A673 (cell line): ENCODE measurements at regions of chr6 and their contacts with region 1.

Region 1: DNA sequence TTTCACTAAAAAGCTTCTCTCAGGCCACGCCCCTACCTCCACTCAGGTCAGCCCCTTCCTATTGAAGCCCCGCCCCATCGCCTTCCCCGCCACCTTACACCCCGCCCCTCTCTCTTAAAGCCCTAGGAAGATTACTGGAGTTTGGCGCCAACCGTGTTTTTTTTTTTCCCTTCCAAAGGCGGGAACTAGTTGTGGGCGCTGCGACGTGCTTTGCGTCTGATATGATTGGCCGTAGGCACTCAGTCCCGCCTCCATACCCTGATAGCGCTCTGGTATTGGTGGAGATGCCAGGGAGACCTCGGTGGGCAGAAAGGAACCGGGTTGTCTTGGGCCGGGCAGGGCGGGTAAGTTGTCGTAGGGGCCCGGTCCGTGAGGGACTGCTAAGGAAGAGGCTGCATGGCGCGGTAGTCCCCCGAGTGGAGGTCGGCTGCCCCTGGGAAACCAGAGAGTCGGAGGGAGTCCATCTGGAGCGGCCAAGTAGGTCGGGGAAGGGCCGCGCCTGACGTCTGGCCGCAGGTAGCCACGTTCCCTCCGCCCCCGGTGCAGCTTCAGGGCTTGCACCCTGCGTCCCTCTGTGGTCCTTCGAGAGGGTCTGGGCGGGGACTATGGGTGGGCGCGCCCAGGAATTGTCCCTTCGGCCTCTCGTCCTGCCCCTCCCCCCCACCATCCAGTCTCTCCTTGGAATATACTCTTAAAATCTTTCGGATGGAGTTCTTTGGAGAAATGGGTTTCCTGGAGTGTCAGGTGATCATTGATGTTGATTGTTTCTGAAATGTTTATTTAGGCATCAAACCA is at the start of gene CASP8AP2:
- DNase-seq: peak; percentile 100
- H3K4me3 ChIP-seq: peak within 1 kb of the TSS; percentile 79
- H3K27ac ChIP-seq: peak within 1 kb of the TSS; percentile 81
- H3K4me1 ChIP-seq: no peaks in the 10 kb centered on the region
- H3K27me3 ChIP-seq: no peaks in the 10 kb centered on the region
- CTCF ChIP-seq: no peak
- total RNA-seq, gene CASP8AP2: 38.2 and 42.4 TPM in 2 replicates

Region 2: DNA sequence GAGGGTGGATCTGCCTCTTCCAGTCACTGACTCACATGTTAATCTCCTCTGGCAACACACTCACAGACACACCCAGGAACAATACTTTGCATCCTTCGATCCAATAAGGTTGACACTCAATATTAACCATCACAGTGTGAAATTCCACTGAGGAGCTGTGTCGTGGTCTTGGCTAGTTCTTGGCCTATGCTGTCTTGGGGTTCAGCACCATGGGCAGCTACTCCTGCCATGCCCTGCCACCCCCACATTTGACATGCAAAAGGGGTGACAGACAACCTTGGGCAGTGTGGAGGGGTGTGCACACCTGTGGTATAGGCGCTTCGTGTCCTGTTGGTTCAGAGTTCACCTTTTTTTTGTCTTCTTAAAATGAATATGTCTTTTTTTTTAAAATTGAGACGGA is 371.1 kb before region 1 on chr6:
- CTCF ChIA-PET with region 1: no interaction called
- POLR2A ChIA-PET with region 1: no interaction called
- intact Hi-C with region 1: no loop called
- DNase-seq: no peak
- H3K4me3 ChIP-seq: no peak overlapping the region
- H3K27ac ChIP-seq: no peak overlapping the region
- H3K4me1 ChIP-seq: peaks cover 7% of the 10 kb centered on the region
- H3K27me3 ChIP-seq: no peaks in the 10 kb centered on the region
- CTCF ChIP-seq: no peak

Region 3: GRCh38 chr6:89776583-89777233 is 53.1 kb before region 1 on chr6:
- CTCF ChIA-PET with region 1: no interaction called
- POLR2A ChIA-PET with region 1: interaction called, 11 read pairs
- intact Hi-C with region 1: no loop called
- DNase-seq: no peak
- H3K4me3 ChIP-seq: no peak overlapping the region
- H3K27ac ChIP-seq: no peak overlapping the region
- H3K4me1 ChIP-seq: no peaks in the 10 kb centered on the region
- H3K27me3 ChIP-seq: no peaks in the 10 kb centered on the region
- CTCF ChIP-seq: no peak

Region 4: GRCh38 chr6:89859744-89860143 is 30.0 kb after region 1 on chr6:
- CTCF ChIA-PET with region 1: no interaction called
- POLR2A ChIA-PET with region 1: interaction called, 11 read pairs
- intact Hi-C with region 1: no loop called
- DNase-seq: no peak
- H3K4me3 ChIP-seq: no peak overlapping the region
- H3K27ac ChIP-seq: no peak overlapping the region
- H3K4me1 ChIP-seq: no peaks in the 10 kb centered on the region
- H3K27me3 ChIP-seq: no peaks in the 10 kb centered on the region
- CTCF ChIP-seq: no peak